ENCODE measurements at regions of chr12 and their contacts with region 1.

Region 1: DNA sequence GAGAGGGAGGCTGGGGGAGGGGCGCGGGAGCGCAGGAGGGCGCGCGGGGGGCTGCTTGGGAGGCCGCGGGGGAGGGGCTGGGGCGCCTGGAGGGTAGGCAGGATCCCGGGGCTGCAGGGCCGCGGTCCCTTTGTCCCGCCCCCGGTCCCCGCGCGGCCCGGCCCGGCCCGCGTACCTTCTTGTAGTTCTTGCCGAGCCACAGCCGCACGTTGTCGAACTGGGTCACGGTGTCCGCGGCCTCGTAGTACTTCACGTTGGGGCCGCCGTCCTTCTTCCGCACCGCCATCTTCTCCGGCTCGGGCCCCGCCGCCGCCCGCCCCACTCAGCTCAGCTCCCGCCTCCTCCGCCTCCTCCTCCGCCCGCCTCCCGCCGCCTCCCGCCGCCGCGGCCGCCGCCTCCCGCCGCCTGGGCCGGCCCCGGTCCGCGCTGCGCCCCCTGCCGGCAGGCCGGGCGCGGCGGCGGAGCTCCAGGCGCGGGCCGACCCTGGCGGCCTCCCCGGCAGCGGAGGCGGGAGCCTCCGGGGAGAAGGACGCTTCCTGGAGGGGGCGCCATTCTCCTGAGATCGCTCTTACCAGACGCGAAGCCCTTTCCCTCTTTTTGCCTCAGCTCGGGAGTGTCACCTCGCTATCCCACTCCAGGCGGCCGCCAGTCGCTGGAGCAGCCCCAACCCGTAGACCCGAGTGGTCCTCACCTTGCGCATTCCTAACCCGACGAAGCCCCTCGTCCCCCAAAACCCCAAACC is at the start of gene SMARCC2:
- DNase-seq: peak; percentile 84 to 88 (median 85)
- H3K4me3 ChIP-seq: peak within 1 kb of the TSS; percentile 87 to 93
- H3K4me3 Mint-ChIP-seq: peak within 1 kb of the TSS; percentile 94 to 98 (median 96)
- H3K27ac ChIP-seq: peak within 1 kb of the TSS; percentile 91
- H3K27ac Mint-ChIP-seq: peak within 1 kb of the TSS; percentile 97 to 100 (median 98)
- H3K4me1 ChIP-seq: peaks cover 24% of the 10 kb centered on the region
- H3K4me1 Mint-ChIP-seq: peaks cover 27 to 54% (median 43%) of the 10 kb centered on the region in 4 donors
- H3K27me3 ChIP-seq: no peaks in the 10 kb centered on the region
- H3K27me3 Mint-ChIP-seq: peaks cover 0 to 2% of the 10 kb centered on the region in 2 donors
- total RNA-seq, gene SMARCC2: 192 to 199 TPM

Region 2: DNA sequence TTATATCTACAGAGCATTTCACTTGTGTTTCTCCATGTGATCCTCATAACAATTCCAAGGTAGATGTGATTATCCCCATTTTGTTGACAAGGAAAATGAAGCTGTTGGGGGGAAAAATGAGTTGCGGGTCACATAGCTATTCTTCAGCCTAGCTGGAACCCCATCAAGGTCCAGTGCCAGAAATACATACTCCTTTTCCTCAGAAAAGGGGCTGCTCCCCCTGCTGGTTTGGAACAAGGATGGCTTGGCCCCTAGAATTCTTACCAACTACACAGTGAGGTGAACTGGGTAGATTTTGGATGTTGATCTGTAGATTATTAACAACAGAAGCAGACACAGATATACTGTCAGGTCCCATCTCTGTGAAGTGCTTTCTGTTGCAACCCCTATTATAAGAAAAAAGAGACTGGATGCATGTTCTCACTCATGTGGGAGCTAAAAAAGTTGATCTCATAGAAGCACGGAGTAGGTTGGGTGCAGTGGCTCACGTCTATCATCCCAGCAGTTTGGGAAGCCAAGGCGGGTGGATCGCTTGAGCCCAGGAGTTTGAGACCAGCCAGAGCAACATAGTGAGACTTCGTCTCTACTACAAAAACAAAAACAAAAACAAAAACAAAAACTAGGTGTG is 159.6 kb before region 1 on chr12:
- CTCF ChIA-PET with region 1: no interaction called
- POLR2A ChIA-PET with region 1: no interaction called
- intact Hi-C with region 1: no loop called
- DNase-seq: peak in 4 of 5 donors; percentile 43 to 49 (median 46)
- H3K4me3 ChIP-seq: no peak overlapping the region
- H3K4me3 Mint-ChIP-seq: no peak overlapping the region
- H3K27ac ChIP-seq: no peak overlapping the region
- H3K27ac Mint-ChIP-seq: peak overlapping the region in 3 of 7 donors; percentile 3 to 68 (median 13)
- H3K4me1 ChIP-seq: peaks cover 7% of the 10 kb centered on the region
- H3K4me1 Mint-ChIP-seq: peaks cover 5 to 20% (median 7%) of the 10 kb centered on the region in 4 donors
- H3K27me3 ChIP-seq: no peaks in the 10 kb centered on the region
- H3K27me3 Mint-ChIP-seq: no peaks in the 10 kb centered on the region

Region 3: DNA sequence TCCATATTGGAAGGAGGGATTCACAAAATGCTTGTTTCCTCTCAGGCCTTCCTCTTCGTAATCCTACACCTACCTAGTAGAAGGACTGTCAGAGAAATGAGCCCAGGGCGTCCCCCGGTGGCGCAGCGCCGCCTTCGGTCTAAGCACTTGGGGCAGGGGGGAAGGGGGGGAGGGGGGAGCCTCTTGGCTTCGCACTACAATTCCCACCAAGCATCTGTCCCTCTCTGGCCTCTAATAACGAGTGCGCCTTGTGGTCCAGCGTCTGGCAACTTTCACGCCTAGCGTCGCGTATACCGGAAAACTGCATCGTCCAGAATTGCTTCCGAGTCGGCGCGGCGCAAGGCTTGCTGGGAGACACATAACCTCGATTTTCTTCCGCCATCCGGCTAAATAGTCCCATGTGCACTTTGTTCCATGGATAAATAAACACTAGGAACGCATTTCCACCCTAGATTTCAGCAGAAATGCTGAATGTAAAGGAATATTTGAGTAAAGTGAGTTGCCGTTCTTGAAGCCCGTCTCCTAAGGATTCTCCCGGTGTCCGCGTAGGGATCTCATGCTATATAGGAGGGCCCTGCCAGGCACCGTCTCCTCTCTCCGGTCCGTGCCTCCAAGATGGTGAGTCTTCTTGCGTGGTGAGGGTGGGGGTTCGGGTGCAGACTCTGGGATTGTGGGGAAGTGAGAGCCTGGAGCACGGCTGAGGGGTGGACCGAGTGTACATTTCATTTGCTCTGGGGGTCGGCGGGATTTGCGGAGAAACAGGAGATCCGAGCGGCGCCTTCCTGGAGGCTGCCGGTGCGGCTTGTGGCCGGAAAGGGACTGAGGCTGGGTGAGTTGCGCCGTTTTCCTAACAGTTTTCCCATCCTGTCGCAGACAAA is 147.6 kb before region 1 on chr12 and contains the start of gene RPS26:
- CTCF ChIA-PET with region 1: interaction called, 13 read pairs
- POLR2A ChIA-PET with region 1: interaction called, 13 read pairs
- intact Hi-C with region 1: no loop called
- DNase-seq: peak; percentile 95 to 98 (median 96)
- H3K4me3 ChIP-seq: peak within 1 kb of the TSS; percentile 94 to 97
- H3K4me3 Mint-ChIP-seq: peak within 1 kb of the TSS; percentile 98 to 100 (median 99)
- H3K27ac ChIP-seq: peak within 1 kb of the TSS; percentile 87
- H3K27ac Mint-ChIP-seq: peak within 1 kb of the TSS; percentile 96 to 100 (median 99)
- H3K4me1 ChIP-seq: peaks cover 23% of the 10 kb centered on the region
- H3K4me1 Mint-ChIP-seq: peaks cover 15 to 45% (median 23%) of the 10 kb centered on the region in 4 donors
- H3K27me3 ChIP-seq: no peaks in the 10 kb centered on the region
- H3K27me3 Mint-ChIP-seq: no peaks in the 10 kb centered on the region
- total RNA-seq, gene RPS26: 55.6 to 55.8 TPM

Region 4: GRCh38 chr12:56143870-56144269 is 45.5 kb before region 1 on chr12:
- CTCF ChIA-PET with region 1: interaction called, 22 read pairs
- POLR2A ChIA-PET with region 1: interaction called, 12 read pairs
- intact Hi-C with region 1: no loop called
- DNase-seq: no peak
- H3K4me3 ChIP-seq: no peak overlapping the region
- H3K4me3 Mint-ChIP-seq: peak overlapping the region in 1 of 8 donors; percentile 10
- H3K27ac ChIP-seq: no peak overlapping the region
- H3K27ac Mint-ChIP-seq: peak overlapping the region; percentile 51 to 90 (median 83)
- H3K4me1 ChIP-seq: peaks cover 39% of the 10 kb centered on the region
- H3K4me1 Mint-ChIP-seq: peaks cover 24 to 53% (median 37%) of the 10 kb centered on the region in 4 donors
- H3K27me3 ChIP-seq: no peaks in the 10 kb centered on the region
- H3K27me3 Mint-ChIP-seq: no peaks in the 10 kb centered on the region

Region 5: GRCh38 chr12:56165369-56165768 is 24.0 kb before region 1 on chr12:
- CTCF ChIA-PET with region 1: interaction called, 8 read pairs
- POLR2A ChIA-PET with region 1: interaction called, 126 read pairs
- intact Hi-C with region 1: no loop called
- DNase-seq: no peak
- H3K4me3 ChIP-seq: no peak overlapping the region
- H3K4me3 Mint-ChIP-seq: no peak overlapping the region
- H3K27ac ChIP-seq: no peak overlapping the region
- H3K27ac Mint-ChIP-seq: peak overlapping the region in 6 of 7 donors; percentile 6 to 86 (median 64)
- H3K4me1 ChIP-seq: peaks cover 16% of the 10 kb centered on the region
- H3K4me1 Mint-ChIP-seq: peaks cover 9 to 30% (median 16%) of the 10 kb centered on the region in 4 donors
- H3K27me3 ChIP-seq: no peaks in the 10 kb centered on the region
- H3K27me3 Mint-ChIP-seq: no peaks in the 10 kb centered on the region

Region 6: GRCh38 chr12:56224102-56224701 is 34.9 kb after region 1 on chr12 and contains the start of gene NABP2:
- CTCF ChIA-PET with region 1: interaction called, 61 read pairs
- POLR2A ChIA-PET with region 1: interaction called, 94 read pairs
- intact Hi-C with region 1: loop called (anchors 1 kb)
- DNase-seq: peak; percentile 88 to 93 (median 89)
- H3K4me3 ChIP-seq: peak within 1 kb of the TSS; percentile 28 to 79
- H3K4me3 Mint-ChIP-seq: peak within 1 kb of the TSS; percentile 83 to 99 (median 87)
- H3K27ac ChIP-seq: peak within 1 kb of the TSS; percentile 83
- H3K27ac Mint-ChIP-seq: peak within 1 kb of the TSS; percentile 90 to 100 (median 99)
- H3K4me1 ChIP-seq: peaks cover 42% of the 10 kb centered on the region
- H3K4me1 Mint-ChIP-seq: peaks cover 24 to 58% (median 43%) of the 10 kb centered on the region in 4 donors
- H3K27me3 ChIP-seq: no peaks in the 10 kb centered on the region
- H3K27me3 Mint-ChIP-seq: no peaks in the 10 kb centered on the region
- total RNA-seq, gene NABP2: 16.9 to 19.1 TPM

Region 7: GRCh38 chr12:56280849-56281248 is 91.5 kb after region 1 on chr12:
- CTCF ChIA-PET with region 1: no interaction called
- POLR2A ChIA-PET with region 1: no interaction called
- intact Hi-C with region 1: no loop called
- DNase-seq: no peak
- H3K4me3 ChIP-seq: no peak overlapping the region
- H3K4me3 Mint-ChIP-seq: no peak overlapping the region
- H3K27ac ChIP-seq: no peak overlapping the region
- H3K27ac Mint-ChIP-seq: peak overlapping the region in 2 of 7 donors; percentile 22 to 71
- H3K4me1 ChIP-seq: no peaks in the 10 kb centered on the region
- H3K4me1 Mint-ChIP-seq: peaks cover 0 to 2% (median 0%) of the 10 kb centered on the region in 4 donors
- H3K27me3 ChIP-seq: no peaks in the 10 kb centered on the region
- H3K27me3 Mint-ChIP-seq: no peaks in the 10 kb centered on the region

Region 8: DNA sequence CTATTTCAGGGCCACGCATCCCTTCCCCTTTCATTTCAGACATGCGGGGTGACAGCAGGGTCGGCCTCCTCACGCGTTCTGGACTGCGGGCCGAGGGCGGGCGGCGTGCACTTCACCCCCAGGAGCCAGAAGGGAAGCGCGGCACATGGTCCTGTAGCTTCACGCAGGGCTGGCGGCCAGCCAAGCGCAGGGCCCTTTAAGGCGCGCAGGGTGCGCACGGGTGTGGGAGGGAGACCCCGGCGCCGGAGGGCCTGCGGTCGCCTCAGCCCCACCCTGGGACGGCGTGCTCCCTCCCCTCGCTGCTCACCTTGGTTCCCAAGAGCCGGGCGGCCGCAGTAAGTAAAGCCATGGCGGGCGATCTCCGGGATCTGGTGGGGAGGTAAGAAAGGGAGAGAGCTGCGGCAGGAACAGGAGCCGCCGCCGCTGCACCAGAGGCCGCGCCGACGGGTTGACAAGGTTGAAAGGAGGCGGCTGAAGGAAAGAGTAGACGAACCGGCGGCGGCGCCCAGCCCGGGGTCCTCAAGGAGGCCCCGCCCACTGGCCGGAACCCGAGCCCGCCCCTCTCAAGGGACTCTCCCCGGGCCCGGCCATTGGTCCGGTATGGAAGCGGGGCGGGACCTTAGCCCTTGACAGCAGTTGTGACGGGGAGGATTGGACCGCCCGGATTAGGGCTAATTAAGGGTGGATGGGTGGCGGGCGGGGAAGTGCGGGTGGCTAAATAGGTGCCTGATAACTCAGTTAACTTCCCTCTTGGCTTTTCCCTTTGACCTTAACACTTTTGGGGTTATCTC is 110.7 kb after region 1 on chr12 and contains the start of gene CS:
- CTCF ChIA-PET with region 1: interaction called, 7 read pairs
- POLR2A ChIA-PET with region 1: interaction called, 4 read pairs
- intact Hi-C with region 1: loop called (anchors 1 kb)
- DNase-seq: peak; percentile 98 to 99 (median 99)
- H3K4me3 ChIP-seq: peak within 1 kb of the TSS; percentile 79 to 97
- H3K4me3 Mint-ChIP-seq: peak within 1 kb of the TSS; percentile 90 to 97 (median 96)
- H3K27ac ChIP-seq: peak within 1 kb of the TSS; percentile 99
- H3K27ac Mint-ChIP-seq: peak within 1 kb of the TSS; percentile 95 to 99 (median 98)
- H3K4me1 ChIP-seq: peaks cover 57% of the 10 kb centered on the region
- H3K4me1 Mint-ChIP-seq: peaks cover 31 to 66% (median 50%) of the 10 kb centered on the region in 4 donors
- H3K27me3 ChIP-seq: no peaks in the 10 kb centered on the region
- H3K27me3 Mint-ChIP-seq: no peaks in the 10 kb centered on the region
- total RNA-seq, gene CS: 134 to 136 TPM

Region 9: DNA sequence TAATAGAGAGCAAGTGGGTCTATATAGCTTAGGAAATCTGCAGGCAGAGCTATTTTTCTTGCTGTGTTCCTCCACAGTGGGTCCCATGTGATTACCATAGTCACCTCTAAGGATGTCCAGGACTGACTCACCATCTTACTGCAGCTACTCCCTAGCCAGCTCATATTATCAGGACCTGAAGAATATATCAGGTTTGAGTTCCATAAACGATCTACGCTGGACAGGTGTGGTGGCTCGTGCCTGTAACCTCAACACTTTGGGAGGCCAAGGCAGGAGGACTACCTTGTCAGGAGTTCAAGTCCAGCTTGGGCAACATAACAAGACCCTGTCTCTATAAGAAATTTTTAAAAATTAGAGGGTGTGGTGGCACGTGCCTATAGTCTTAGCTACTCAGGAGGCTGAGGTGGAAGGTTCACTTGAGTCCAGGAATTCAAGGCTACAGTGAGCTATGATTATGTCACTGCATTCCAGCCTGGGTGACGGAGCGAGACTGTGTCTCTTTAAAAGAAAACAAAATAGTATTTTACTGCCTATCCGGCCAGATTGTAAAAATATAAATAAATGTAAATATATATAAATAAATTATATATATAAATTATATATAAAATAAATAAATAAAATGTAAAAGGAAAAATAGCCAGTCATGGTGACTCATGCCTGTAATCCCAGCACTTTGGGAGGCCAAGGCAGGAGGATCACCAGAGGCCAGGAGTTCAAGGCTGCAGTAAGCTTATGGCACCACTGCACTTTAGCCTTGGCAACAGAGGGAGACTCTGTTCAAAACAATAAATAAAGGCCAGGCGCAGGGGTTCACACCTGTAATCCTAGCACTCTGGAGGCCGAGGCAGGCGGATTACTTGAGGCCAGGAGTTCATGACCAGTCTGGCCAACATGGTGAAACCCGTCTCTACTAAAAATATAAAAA is 272.1 kb after region 1 on chr12:
- CTCF ChIA-PET with region 1: interaction called, 13 read pairs
- POLR2A ChIA-PET with region 1: interaction called, 23 read pairs
- intact Hi-C with region 1: loop called (anchors 1 kb)
- DNase-seq: no peak
- H3K4me3 ChIP-seq: no peak overlapping the region
- H3K4me3 Mint-ChIP-seq: no peak overlapping the region
- H3K27ac ChIP-seq: no peak overlapping the region
- H3K27ac Mint-ChIP-seq: no peak overlapping the region
- H3K4me1 ChIP-seq: peaks cover 8% of the 10 kb centered on the region
- H3K4me1 Mint-ChIP-seq: peaks cover 2 to 5% (median 5%) of the 10 kb centered on the region in 4 donors
- H3K27me3 ChIP-seq: no peaks in the 10 kb centered on the region
- H3K27me3 Mint-ChIP-seq: no peaks in the 10 kb centered on the region

Measured in CD4-positive, alpha-beta memory T cell (primary cell).